ENCODE measurements at regions of chr5 and their contacts with region 1.

Region 1: GRCh38 chr5:2154715-2155114 is 272.0 kb upstream of the IRX4 start:
- DNase-seq: no peak
- ATAC-seq: no peak

Region 2: DNA sequence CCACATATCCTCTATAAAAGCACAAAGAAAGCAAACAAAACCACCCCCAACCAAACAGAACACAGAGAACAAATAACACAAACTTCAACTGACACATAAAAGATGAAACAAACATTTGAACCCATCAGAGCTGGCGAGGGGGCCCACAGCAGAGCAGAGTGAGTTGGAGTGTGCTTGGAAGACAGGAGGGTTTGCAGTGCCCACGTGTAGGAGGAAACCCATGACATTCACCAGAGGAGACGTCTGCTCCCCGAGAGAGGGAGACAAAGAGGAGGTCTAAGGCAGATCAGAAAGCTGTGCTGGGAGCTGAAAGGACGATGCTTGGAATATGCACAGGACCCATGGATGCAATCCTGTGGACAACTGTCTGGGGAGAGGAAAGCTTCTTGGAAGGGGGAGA is 382.1 kb before region 1 on chr5:
- intact Hi-C with region 1: loop called (anchors 5 kb)
- DNase-seq: no peak
- ATAC-seq: peak; percentile 58

Region 3: DNA sequence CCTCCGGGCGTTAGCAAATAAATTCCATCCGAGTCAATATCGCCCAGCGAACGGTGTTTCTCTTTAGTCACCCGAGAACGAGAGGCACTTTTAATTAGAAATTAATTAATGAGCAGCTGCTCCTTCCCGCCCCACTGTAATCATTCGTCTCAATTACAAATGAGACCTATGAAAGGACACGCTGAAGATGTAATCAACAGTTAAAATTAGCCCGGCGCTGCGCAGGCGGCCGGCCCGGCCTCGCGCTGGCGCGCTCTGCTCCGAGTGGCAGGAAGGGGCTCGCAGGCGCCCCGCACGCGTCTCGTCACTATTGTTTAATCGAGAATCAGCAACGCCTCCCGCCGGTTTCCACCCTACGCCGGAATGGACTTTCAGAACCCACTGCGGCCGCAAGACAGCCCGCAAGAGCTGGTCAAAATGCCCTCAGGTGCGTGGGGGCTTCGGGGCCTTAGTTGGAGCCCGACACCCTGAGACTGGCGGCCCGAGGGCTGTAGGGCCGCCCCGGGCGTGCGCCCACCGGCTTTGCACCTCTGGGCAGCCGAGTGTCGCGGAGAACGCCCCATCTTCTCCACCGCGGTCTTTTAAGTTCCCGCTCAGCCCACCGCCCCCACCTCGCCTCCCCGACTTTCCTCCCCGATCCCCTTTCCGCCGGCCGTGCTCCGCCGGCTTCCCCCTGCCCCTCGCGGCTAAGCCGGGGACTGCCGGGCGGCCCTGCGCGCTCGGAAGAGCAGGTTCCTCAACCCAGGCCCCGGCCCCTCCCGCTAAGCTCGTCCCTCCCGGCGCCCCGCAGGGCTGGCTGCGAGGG is 271.4 kb before region 1 on chr5:
- intact Hi-C with region 1: no loop called
- DNase-seq: peak; percentile 55
- ATAC-seq: peak; percentile 52

Region 4: GRCh38 chr5:2105141-2105540 is 49.6 kb before region 1 on chr5:
- intact Hi-C with region 1: no loop called
- DNase-seq: no peak
- ATAC-seq: no peak

Region 5: GRCh38 chr5:2511126-2511525 is 356.4 kb after region 1 on chr5:
- intact Hi-C with region 1: no loop called
- DNase-seq: no peak
- ATAC-seq: no peak